Naive thymus-derived CD4-positive, alpha-beta T cell (primary cell): ENCODE measurements at regions of chr2 and their contacts with region 1.

Region 1: DNA sequence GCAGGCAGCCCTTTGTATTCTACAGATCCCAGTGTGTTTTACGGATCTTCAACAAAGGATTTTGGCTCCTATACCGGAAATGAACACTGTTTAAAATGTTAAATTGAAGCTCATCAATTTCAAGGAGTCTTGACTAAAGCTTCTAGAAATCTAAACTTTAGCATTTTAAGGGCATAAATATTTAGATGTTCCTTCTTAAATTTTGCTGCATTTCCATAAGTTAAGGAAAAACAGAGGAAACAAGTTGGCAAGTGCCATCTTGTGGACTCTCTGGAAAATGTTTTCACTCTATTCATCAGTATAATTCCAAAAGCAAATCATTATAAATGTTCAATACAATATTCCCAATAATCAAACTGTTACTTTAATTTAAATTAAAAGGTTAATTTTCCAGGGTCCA is 19.6 kb downstream of the CHN1 start:
- DNase-seq: no peak
- ATAC-seq: no peak
- H3K4me3 ChIP-seq: no peak overlapping the region
- H3K4me3 Mint-ChIP-seq: no peak overlapping the region
- H3K27ac ChIP-seq: no peak overlapping the region
- H3K27ac Mint-ChIP-seq: no peak overlapping the region
- H3K4me1 ChIP-seq: no peaks in the 10 kb centered on the region
- H3K4me1 Mint-ChIP-seq: peaks cover 0 to 9% (median 7%) of the 10 kb centered on the region in 7 donors
- H3K27me3 ChIP-seq: no peaks in the 10 kb centered on the region
- H3K27me3 Mint-ChIP-seq: peaks cover 0 to 25% (median 5%) of the 10 kb centered on the region in 5 donors

Region 2: GRCh38 chr2:174771631-174772471 is 213.8 kb before region 1 on chr2:
- CTCF ChIA-PET with region 1: interaction called, 14 read pairs
- POLR2A ChIA-PET with region 1: no interaction called
- intact Hi-C with region 1: loop called (anchors 1 kb)
- DNase-seq: peak in 2 of 9 donors; percentile 25 to 42
- ATAC-seq: peak; percentile 72
- H3K4me3 ChIP-seq: no peak overlapping the region
- H3K4me3 Mint-ChIP-seq: peak overlapping the region in 1 of 10 donors; percentile 24
- H3K27ac ChIP-seq: no peak overlapping the region
- H3K27ac Mint-ChIP-seq: peak overlapping the region in 3 of 9 donors; percentile 21 to 91 (median 70)
- H3K4me1 ChIP-seq: peaks cover 0 to 8% of the 10 kb centered on the region in 2 donors
- H3K4me1 Mint-ChIP-seq: peaks cover 7 to 22% (median 14%) of the 10 kb centered on the region in 7 donors
- H3K27me3 ChIP-seq: no peaks in the 10 kb centered on the region
- H3K27me3 Mint-ChIP-seq: peaks cover 0 to 6% (median 0%) of the 10 kb centered on the region in 5 donors

Region 3: DNA sequence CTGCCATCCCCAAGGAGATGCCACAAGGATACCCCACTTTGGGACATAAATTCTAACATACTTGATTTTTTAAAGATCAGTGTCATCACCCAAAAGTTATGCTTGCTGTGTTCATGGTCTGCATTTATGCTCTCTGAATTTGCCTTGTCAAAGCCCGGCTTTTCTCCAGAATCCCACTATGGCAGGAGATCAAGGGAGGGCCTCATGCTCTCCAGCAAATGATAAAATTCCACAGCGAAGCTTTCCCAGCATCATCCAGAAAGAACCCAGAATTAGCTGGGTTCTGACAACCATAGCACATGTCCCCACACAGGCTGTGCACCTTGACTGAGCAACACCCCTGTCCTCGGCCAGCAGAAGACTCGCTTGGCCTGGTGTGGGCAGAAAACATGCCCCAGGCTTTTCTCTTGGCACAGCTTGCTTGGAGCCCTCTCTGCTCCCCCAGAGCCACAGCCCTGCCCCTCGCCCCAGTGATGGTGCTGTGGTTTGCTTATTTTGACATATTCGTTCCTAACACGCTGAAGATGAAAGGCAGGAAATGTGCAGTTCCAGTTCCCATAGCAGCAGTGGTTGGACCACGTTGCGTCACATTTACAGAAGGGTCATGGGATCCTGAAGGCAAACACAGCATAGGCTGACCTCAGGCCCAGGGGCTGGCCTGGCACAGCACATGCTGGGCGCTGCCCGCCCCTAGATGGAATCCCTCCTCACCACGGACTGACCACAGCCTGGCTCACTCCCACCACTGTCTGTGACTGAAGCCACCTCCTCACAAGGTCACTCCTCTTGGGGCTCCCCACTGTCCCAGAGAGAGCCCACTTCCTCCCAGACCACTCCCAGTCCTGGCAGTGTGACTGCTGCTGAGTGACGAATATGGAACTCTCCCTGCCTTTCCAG is 207.3 kb before region 1 on chr2:
- CTCF ChIA-PET with region 1: interaction called, 3 read pairs
- POLR2A ChIA-PET with region 1: no interaction called
- intact Hi-C with region 1: loop called in 1 of 2 experiments (anchors 2 kb)
- DNase-seq: peak; percentile 51 to 93 (median 91)
- ATAC-seq: peak; percentile 93
- H3K4me3 ChIP-seq: peak overlapping the region; percentile 3
- H3K4me3 Mint-ChIP-seq: peak overlapping the region; percentile 53 to 84 (median 72)
- H3K27ac ChIP-seq: peak overlapping the region; percentile 61
- H3K27ac Mint-ChIP-seq: peak overlapping the region; percentile 55 to 97 (median 95)
- H3K4me1 ChIP-seq: peaks cover 28 to 39% of the 10 kb centered on the region in 2 donors
- H3K4me1 Mint-ChIP-seq: peaks cover 34 to 60% (median 46%) of the 10 kb centered on the region in 7 donors
- H3K27me3 ChIP-seq: no peaks in the 10 kb centered on the region
- H3K27me3 Mint-ChIP-seq: no peaks in the 10 kb centered on the region

Region 4: DNA sequence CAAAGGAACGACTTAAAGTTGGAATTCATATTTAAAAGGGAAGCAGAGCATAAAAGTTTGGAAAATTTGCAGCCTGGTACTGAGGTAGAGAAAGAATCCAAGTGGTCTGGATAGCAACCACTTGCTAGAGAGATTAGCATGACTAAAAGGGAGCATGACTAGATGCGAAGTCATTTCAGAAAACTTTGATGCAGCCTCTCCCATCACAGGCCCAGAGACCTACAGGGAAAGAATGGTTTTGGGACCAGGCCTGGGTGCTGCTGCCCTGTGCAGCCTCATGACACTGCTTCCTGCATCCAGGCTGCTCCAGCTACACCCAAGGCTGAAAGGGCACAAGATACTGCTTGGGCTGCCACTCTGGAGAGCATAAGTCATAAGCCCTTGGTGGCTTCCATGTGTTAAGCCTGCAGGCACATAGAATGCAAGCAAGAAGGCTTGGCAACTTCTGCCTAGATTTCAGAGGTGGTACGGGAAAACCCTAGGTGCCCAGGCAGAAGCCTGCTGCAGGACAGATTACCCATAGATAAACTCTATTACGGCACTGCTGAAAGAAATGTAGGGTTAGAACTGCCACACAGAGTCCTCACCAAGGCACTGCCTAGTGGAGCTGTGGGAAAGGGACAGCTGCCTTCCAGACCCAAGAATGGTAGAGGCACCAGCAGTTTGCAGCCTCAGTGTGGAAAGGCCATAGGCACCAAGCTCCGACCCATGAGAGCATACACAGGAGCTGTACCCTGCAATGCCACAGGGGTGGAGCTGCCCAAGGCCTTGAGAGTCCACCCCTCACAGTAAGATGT is 32.2 kb after region 1 on chr2:
- CTCF ChIA-PET with region 1: no interaction called
- POLR2A ChIA-PET with region 1: no interaction called
- intact Hi-C with region 1: no loop called
- DNase-seq: no peak
- ATAC-seq: no peak
- H3K4me3 ChIP-seq: no peak overlapping the region
- H3K4me3 Mint-ChIP-seq: no peak overlapping the region
- H3K27ac ChIP-seq: no peak overlapping the region
- H3K27ac Mint-ChIP-seq: no peak overlapping the region
- H3K4me1 ChIP-seq: no peaks in the 10 kb centered on the region
- H3K4me1 Mint-ChIP-seq: no peaks in the 10 kb centered on the region
- H3K27me3 ChIP-seq: no peaks in the 10 kb centered on the region
- H3K27me3 Mint-ChIP-seq: peaks cover 0 to 14% (median 5%) of the 10 kb centered on the region in 5 donors